PC-9 (cell line): ENCODE measurements at regions of chr1 and their contacts with region 1.

Region 1: GRCh38 chr1:204128964-204129896 is 22.6 kb downstream of the ETNK2 start:
- DNase-seq: peak in 1 of 2 experiments; percentile 61
- H3K4me3 ChIP-seq: no peak overlapping the region
- H3K27ac ChIP-seq: peak overlapping the region; percentile 80
- H3K4me1 ChIP-seq: peaks cover 66% of the 10 kb centered on the region
- H3K27me3 ChIP-seq: no peaks in the 10 kb centered on the region
- CTCF ChIP-seq: peak; percentile 80

Region 2: GRCh38 chr1:203871107-203871875 is 257.9 kb before region 1 on chr1:
- CTCF ChIA-PET with region 1: interaction called, 30 read pairs
- POLR2A ChIA-PET with region 1: no interaction called
- intact Hi-C with region 1: loop called (anchors 1 kb)
- DNase-seq: peak; percentile 41 to 60
- H3K4me3 ChIP-seq: no peak overlapping the region
- H3K27ac ChIP-seq: peak overlapping the region; percentile 63
- H3K4me1 ChIP-seq: peaks cover 33% of the 10 kb centered on the region
- H3K27me3 ChIP-seq: no peaks in the 10 kb centered on the region
- CTCF ChIP-seq: peak; percentile 92

Region 3: DNA sequence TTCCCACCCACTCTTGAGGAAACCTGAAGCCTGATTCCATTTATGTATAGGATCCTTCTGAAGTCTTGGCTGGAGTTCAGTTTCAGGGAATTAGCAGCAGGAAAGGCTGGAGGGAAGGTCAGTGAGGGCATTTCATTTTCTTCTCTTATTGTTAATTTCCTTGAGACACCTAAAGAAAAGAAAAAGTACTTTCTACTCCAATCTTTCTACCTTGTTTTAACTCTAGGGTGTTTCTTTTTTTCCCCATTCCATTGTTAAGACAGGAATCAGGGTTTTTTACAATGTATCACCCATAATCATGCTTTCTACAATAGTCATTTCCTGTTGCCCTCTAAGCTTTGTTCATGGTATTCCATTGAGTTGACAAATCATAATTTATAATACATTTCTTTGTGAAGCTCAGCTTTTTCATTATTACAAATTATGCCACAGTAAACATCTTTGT is 240.4 kb before region 1 on chr1:
- CTCF ChIA-PET with region 1: no interaction called
- POLR2A ChIA-PET with region 1: no interaction called
- intact Hi-C with region 1: no loop called
- DNase-seq: peak; percentile 14 to 87
- H3K4me3 ChIP-seq: no peak overlapping the region; the same call in 1 of the 2 replicates
- H3K27ac ChIP-seq: peak overlapping the region; percentile 89
- H3K4me1 ChIP-seq: peaks cover 34% of the 10 kb centered on the region
- H3K27me3 ChIP-seq: no peaks in the 10 kb centered on the region
- CTCF ChIP-seq: no peak

Region 4: GRCh38 chr1:203999618-204000017 is 129.6 kb before region 1 on chr1:
- CTCF ChIA-PET with region 1: interaction called, 11 read pairs
- POLR2A ChIA-PET with region 1: no interaction called
- intact Hi-C with region 1: no loop called
- DNase-seq: no peak
- H3K4me3 ChIP-seq: no peak overlapping the region
- H3K27ac ChIP-seq: no peak overlapping the region
- H3K4me1 ChIP-seq: peaks cover 46% of the 10 kb centered on the region
- H3K27me3 ChIP-seq: no peaks in the 10 kb centered on the region
- CTCF ChIP-seq: no peak

Region 5: GRCh38 chr1:204080163-204080903 is 48.9 kb before region 1 on chr1:
- CTCF ChIA-PET with region 1: interaction called, 10 read pairs
- POLR2A ChIA-PET with region 1: interaction called, 22 read pairs
- intact Hi-C with region 1: no loop called
- DNase-seq: peak; percentile 92 to 94
- H3K4me3 ChIP-seq: peak overlapping the region; percentile 35; the same call in 1 of the 2 replicates
- H3K27ac ChIP-seq: peak overlapping the region; percentile 77
- H3K4me1 ChIP-seq: peaks cover 96% of the 10 kb centered on the region
- H3K27me3 ChIP-seq: no peaks in the 10 kb centered on the region
- CTCF ChIP-seq: no peak

Region 6: GRCh38 chr1:204162231-204163074 is 33.2 kb after region 1 on chr1:
- CTCF ChIA-PET with region 1: interaction called, 8 read pairs
- POLR2A ChIA-PET with region 1: interaction called, 4 read pairs
- intact Hi-C with region 1: loop called (anchors 1 kb)
- DNase-seq: peak; percentile 93 to 94
- H3K4me3 ChIP-seq: no peak overlapping the region
- H3K27ac ChIP-seq: 0 out of 2 replicates have a peak overlapping the region, but pooled peaks have one; percentile 28
- H3K4me1 ChIP-seq: peaks cover 21% of the 10 kb centered on the region
- H3K27me3 ChIP-seq: no peaks in the 10 kb centered on the region
- CTCF ChIP-seq: peak; percentile 99

Region 7: DNA sequence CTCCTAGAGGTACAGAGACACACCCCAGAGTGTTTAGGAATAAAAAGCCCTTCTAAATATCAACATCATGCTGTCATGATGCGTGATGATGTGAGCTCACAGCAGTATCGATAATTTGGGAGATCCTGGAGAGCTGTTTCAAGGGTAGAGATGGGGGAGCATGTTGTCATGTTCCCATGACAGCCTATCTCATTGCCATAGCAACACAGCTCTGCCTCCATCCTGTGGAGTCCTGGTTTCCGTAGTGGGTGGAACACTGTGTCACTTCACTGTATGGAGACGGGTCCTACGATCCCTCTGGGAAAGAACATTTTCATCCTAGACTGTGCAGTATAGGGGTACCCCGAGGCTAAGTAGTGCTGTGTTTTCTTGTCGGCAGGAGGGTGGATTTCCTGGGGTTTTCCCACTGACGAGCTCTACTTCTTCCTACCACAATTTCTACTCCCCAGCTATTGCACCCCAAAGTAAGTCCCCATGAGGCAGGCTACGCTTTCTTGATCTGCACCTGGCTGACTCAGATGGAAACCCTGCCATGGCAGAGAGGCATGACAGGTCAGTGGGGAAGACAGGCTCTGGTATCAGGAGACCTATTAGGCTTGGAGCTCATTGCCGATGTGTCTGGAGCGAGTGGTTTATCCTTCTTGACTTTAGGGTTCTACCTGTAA is 59.9 kb after region 1 on chr1:
- CTCF ChIA-PET with region 1: no interaction called
- POLR2A ChIA-PET with region 1: no interaction called
- intact Hi-C with region 1: no loop called
- DNase-seq: no peak
- H3K4me3 ChIP-seq: no peak overlapping the region
- H3K27ac ChIP-seq: no peak overlapping the region
- H3K4me1 ChIP-seq: peaks cover 16% of the 10 kb centered on the region
- H3K27me3 ChIP-seq: no peaks in the 10 kb centered on the region
- CTCF ChIP-seq: no peak